ENCODE measurements at regions of chr3 and their contacts with region 1.

Region 1: GRCh38 chr3:107927361-107928083 is 163.3 kb downstream of the CD47 start:
- DNase-seq: peak; percentile 86
- ATAC-seq: peak; percentile 92
- H3K4me3 Mint-ChIP-seq: peak overlapping the region; percentile 73
- H3K27ac Mint-ChIP-seq: peak overlapping the region; percentile 76
- H3K4me1 Mint-ChIP-seq: peaks cover 9% of the 10 kb centered on the region
- H3K27me3 Mint-ChIP-seq: peaks cover 4% of the 10 kb centered on the region

Region 2: GRCh38 chr3:107816107-107816506 is 111.4 kb before region 1 on chr3:
- CTCF ChIA-PET with region 1: no interaction called
- POLR2A ChIA-PET with region 1: no interaction called
- intact Hi-C with region 1: no loop called
- DNase-seq: no peak
- ATAC-seq: no peak
- H3K4me3 Mint-ChIP-seq: no peak overlapping the region
- H3K27ac Mint-ChIP-seq: no peak overlapping the region
- H3K4me1 Mint-ChIP-seq: no peaks in the 10 kb centered on the region
- H3K27me3 Mint-ChIP-seq: peaks cover 3% of the 10 kb centered on the region

Region 3: DNA sequence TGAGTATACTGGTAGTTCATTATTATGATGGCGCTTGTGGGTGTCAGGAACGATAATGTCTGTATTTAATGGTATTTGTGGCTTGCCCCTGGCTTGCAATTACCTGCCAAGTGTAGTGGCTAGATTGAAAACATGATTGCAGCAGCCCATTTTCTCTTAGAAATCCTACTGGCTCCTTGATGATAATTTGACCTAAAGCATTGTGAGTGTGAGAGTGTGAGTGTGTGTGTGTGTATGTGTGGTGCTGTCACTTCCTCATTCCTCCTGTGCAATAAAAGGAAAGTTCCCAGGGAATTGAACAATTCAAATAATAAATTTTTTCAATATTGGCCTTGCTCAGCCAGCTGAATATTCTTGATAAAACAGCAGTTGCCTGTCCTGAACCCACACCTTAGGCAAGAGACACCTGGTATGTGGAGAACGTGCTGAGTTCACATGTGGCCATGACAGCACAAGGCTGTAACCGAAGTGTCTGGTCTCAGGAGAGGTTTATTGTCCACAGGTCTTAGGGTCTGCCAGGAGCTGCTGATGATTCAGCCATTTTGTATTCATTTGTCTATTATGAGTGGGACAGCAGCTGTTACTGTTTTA is 30.0 kb before region 1 on chr3:
- CTCF ChIA-PET with region 1: interaction called, 12 read pairs
- POLR2A ChIA-PET with region 1: no interaction called
- intact Hi-C with region 1: no loop called
- DNase-seq: no peak
- ATAC-seq: no peak
- H3K4me3 Mint-ChIP-seq: no peak overlapping the region
- H3K27ac Mint-ChIP-seq: no peak overlapping the region
- H3K4me1 Mint-ChIP-seq: no peaks in the 10 kb centered on the region
- H3K27me3 Mint-ChIP-seq: peaks cover 25% of the 10 kb centered on the region

Region 4: GRCh38 chr3:107943786-107944523 is 16.4 kb after region 1 on chr3:
- CTCF ChIA-PET with region 1: interaction called, 27 read pairs
- POLR2A ChIA-PET with region 1: no interaction called
- intact Hi-C with region 1: no loop called
- DNase-seq: no peak
- ATAC-seq: no peak
- H3K4me3 Mint-ChIP-seq: no peak overlapping the region
- H3K27ac Mint-ChIP-seq: no peak overlapping the region
- H3K4me1 Mint-ChIP-seq: peaks cover 30% of the 10 kb centered on the region
- H3K27me3 Mint-ChIP-seq: no peaks in the 10 kb centered on the region

Region 5: DNA sequence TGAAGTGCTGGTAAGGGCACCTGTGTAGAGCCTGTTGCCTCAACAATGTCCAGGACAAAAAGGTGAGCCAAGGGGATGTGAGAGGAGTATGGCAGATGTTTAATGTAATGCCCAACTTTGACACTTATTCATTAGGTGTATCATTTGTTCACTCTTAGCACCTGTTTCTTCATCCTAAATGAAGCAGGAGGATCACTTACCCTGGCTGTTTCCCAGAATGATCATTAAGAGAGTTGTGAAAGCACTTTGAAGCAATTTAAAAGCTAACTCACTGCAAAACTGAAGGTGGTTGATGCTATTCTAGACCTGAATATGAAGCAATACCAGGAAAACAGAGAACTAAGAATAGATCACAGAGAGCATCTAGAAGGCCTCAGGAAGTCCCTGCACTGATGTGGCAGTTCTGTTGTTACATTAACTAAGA is 365.4 kb after region 1 on chr3:
- CTCF ChIA-PET with region 1: no interaction called
- POLR2A ChIA-PET with region 1: no interaction called
- intact Hi-C with region 1: loop called in 1 of 2 experiments (anchors 10 kb)
- DNase-seq: peak; percentile 39
- ATAC-seq: peak; percentile 74
- H3K4me3 Mint-ChIP-seq: no peak overlapping the region
- H3K27ac Mint-ChIP-seq: peak overlapping the region; percentile 56
- H3K4me1 Mint-ChIP-seq: peaks cover 55% of the 10 kb centered on the region
- H3K27me3 Mint-ChIP-seq: no peaks in the 10 kb centered on the region

Region 6: DNA sequence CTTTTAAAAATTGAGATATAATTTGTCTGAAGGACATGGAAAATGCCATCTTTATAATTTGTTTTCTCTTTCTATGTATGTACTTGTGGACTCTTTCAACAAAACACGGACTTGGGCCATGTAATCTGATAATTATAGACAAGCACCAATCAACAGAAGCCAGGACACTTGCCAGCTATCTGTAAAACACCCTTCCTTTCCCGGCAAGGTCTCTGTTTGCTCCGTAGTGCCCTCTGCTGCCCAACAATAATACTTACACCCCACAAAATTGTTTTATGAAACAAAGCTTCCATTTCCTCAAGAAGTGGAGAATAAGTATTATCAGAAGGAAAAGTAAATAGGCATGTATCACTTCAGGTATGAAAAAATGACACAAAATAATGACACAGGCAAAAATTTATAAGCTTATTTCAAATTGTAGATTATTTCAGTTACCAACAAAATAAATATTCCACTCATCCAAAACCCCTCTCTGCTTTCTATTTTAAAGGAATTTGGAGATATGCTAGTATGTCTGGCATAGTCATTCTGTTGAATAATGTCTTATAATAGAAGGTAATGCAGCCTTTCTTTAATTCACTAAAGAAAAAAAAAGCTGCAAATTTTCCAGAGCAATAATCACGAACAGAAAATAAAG is 550.1 kb after region 1 on chr3:
- CTCF ChIA-PET with region 1: interaction called, 6 read pairs
- POLR2A ChIA-PET with region 1: interaction called, 3 read pairs
- intact Hi-C with region 1: loop called in 1 of 2 experiments (anchors 5 kb)
- DNase-seq: peak; percentile 78
- ATAC-seq: peak; percentile 79
- H3K4me3 Mint-ChIP-seq: no peak overlapping the region
- H3K27ac Mint-ChIP-seq: no peak overlapping the region
- H3K4me1 Mint-ChIP-seq: no peaks in the 10 kb centered on the region
- H3K27me3 Mint-ChIP-seq: peaks cover 2% of the 10 kb centered on the region

Measured in activated CD4-positive, alpha-beta T cell treated with anti-CD3 and anti-CD28 coated beads for 36 hours (primary cell).